ENCODE measurements at regions of chr1 and their contacts with region 1.

Region 1: DNA sequence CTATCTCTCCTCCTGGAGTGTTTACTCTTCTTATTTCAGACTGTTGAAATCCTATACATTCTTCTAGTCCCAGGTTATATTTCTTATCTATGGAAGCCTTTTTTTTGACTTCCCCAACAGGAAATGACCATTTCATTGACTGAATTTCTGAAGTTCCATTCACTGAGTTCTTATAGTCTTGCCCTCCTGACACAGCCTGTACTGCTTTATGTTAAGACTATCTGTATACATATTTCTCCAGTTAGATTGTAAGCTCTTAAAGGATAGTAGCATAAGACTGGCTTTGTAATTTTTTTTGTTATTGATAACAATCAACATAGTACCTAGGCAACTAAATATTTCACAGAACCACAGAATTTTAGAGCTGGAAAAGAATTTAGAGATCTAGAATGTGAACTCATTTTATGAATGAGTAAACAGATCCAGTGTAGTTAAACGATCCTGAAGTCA is 14.9 kb upstream of the MACF1 start:
- DNase-seq: no peak
- H3K27ac ChIP-seq: no peak overlapping the region
- CTCF ChIP-seq: no peak

Region 2: DNA sequence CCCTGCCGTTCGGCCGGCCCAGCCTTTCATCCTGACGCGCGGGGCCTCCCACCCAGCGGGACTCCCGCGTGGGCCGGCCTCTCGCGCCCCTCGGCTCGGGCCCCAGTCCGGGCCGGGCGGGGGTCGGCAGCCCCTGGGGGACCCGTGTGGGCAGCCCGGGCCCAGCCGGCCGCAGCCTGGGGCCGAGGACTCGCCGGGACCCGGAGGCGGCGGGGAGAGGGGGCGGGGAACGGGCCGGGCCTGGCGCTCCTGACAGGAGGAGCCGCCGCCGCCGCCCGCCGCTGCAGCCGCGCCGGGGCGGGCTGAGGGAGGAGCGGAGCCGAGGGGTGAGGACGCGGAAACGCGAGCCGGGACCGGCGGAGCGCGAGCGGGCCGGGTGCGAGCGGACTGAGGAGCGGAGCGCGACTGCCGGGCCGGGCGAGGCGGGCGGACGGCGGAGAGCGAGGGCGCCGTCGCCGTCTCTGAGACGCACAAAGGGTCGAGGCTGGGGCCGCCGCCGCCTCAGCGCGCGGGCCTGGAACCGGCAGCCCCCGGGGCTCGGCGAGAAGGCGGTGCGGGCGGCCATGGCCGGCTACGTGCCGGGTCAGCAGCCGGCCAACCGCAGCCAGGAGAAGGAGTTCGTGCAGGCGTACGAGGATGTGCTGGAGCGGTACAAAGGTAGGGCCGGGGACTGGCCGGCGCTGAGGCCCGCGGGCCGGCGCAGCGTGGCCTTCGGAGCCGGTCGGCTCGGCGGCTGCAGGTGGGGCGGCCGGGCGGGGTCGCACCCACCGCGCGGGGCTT is 84.4 kb before region 1 on chr1:
- CTCF ChIA-PET with region 1: interaction called, 32 read pairs
- POLR2A ChIA-PET with region 1: interaction called, 6 read pairs
- DNase-seq: peak; percentile 62
- H3K27ac ChIP-seq: peak overlapping the region; percentile 93
- CTCF ChIP-seq: no peak

Measured in RWPE1 (cell line).